ENCODE measurements at regions of chr6 and their contacts with region 1.

Region 1: GRCh38 chr6:158808941-158809678 is 10.1 kb downstream of the EZR start:
- DNase-seq: peak; percentile 36
- H3K4me3 Mint-ChIP-seq: no peak overlapping the region
- H3K27ac Mint-ChIP-seq: peak overlapping the region; percentile 67
- H3K4me1 Mint-ChIP-seq: peaks cover 94% of the 10 kb centered on the region
- H3K27me3 Mint-ChIP-seq: no peaks in the 10 kb centered on the region

Region 2: DNA sequence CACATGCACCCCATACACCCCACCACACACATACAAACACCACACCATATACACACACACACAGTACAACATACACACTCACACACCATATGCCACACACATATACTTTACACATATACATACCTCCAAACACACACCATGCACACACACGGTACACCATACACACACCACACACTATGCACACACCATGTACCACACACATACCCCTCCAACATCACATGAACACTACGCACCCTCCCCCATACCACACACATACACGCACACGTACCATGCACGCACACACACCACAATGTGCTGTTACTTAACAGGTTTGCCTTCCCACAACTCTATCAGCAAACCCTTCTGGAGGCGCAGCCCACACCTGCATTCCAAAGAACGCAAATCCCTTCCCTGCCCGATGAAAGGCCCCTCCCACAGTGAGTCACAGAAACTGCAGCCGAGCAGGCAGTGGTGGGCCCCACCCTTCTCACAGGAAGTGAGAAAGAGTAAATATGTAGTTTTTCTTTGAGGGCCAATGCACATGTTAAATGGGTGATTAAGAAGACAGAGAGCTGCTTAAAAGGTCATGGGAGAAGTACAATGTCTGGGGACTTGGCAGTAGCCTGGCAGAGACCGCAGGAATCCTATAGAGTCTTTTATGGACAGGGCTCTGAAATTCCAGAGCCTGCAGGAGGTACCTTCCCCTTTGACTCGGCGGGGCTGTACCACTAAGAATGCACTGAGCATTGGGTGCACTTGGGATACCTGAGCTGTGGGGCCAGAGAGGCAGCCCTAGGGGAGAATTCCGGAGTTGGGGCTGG is 44.2 kb after region 1 on chr6:
- CTCF ChIA-PET with region 1: no interaction called
- POLR2A ChIA-PET with region 1: interaction called, 39 read pairs
- DNase-seq: peak; percentile 90
- H3K4me3 Mint-ChIP-seq: no peak overlapping the region
- H3K27ac Mint-ChIP-seq: no peak overlapping the region
- H3K4me1 Mint-ChIP-seq: peaks cover 36% of the 10 kb centered on the region
- H3K27me3 Mint-ChIP-seq: peaks cover 6% of the 10 kb centered on the region

Measured in activated CD4-positive, alpha-beta memory T cell treated with anti-CD3 and anti-CD28 coated beads, Interleukin-2, amount 10 ng/mL, durations not matched to agents 7 days and 5 days (primary cell).